ENCODE measurements at regions of chr15 and their contacts with region 1.

Region 1: DNA sequence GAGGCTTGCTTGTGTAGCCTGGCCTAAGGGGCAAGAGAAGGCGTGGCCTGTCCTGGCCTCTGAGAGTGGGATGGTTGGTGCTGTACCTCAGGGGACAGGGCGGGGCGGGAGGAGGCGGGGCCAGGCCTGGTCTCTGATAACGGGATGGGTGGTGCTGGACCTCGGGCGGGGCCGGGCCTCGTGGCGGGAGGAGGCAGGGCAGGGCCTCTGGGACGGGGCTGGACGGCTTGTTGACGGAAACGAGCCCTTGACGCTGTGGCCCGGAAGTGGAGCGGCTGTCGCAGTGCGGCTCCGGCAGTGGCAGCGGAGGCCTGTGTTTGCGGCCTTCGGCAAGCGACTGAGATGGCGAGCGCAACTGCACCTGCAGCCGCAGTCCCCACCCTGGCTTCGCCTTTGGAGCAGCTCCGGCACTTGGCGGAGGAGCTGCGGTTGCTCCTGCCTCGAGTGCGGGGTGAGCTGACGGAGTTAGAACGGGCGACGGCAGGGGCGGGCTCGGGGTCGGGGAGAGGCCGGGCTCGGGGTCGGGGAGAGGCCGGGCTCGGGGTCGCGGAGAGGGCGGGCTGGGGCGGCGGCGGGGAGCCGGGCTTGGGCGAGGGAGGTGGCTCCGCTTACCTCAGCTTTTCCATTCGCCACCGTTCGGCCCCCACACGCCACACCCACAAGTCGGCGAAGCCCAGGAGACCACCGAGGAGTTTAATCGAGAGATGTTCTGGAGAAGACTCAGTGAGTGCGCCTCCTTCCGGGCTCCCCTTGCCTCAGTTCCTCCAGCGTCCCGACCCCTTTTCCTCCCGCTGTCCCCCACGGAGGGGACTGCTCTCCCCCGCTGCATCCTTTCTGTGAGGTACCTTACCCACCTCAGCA is at the start of gene CCNDBP1:
- DNase-seq: peak; percentile 69 to 90 (median 79)
- ATAC-seq: peak; percentile 91
- H3K4me3 ChIP-seq: peak within 1 kb of the TSS; percentile 91
- H3K4me3 Mint-ChIP-seq: peak within 1 kb of the TSS; percentile 90 to 98 (median 96)
- H3K27ac ChIP-seq: peak within 1 kb of the TSS; percentile 95
- H3K27ac Mint-ChIP-seq: peak within 1 kb of the TSS; percentile 95 to 99 (median 98)
- H3K4me1 ChIP-seq: peaks cover 16 to 22% of the 10 kb centered on the region in 2 donors
- H3K4me1 Mint-ChIP-seq: peaks cover 19 to 54% (median 35%) of the 10 kb centered on the region in 7 donors
- H3K27me3 ChIP-seq: no peaks in the 10 kb centered on the region
- H3K27me3 Mint-ChIP-seq: no peaks in the 10 kb centered on the region
- total RNA-seq, gene CCNDBP1: 72.3 to 110 (median 100) TPM

Region 2: DNA sequence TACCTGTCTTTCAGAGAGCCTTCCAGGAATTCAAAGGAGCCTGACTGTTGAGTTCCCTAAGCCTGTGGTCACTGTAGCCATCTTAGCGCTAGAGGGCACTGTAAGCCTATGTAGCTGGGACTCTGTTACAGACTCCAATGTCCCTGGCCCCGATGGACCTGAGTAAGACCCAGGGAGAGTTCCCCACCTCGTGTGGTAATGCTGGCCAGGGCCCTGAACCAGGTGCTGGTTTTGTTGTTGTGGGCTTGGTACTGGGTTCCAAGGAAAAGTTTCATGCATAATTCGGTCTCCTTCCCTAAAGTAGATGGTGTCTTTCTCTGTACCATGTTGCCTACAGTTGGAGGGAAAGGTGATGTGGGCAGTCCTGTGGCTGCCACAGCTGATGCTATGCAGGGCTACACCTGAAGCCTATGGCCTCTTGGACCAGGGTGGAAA is 480.9 kb before region 1 on chr15:
- CTCF ChIA-PET with region 1: no interaction called
- POLR2A ChIA-PET with region 1: no interaction called
- intact Hi-C with region 1: loop called in 1 of 2 experiments (anchors 5 kb)
- DNase-seq: peak in 8 of 9 donors; percentile 23 to 59 (median 53)
- ATAC-seq: peak; percentile 96
- H3K4me3 ChIP-seq: no peak overlapping the region
- H3K4me3 Mint-ChIP-seq: no peak overlapping the region
- H3K27ac ChIP-seq: no peak overlapping the region
- H3K27ac Mint-ChIP-seq: no peak overlapping the region
- H3K4me1 ChIP-seq: no peaks in the 10 kb centered on the region
- H3K4me1 Mint-ChIP-seq: peaks cover 0 to 10% (median 5%) of the 10 kb centered on the region in 7 donors
- H3K27me3 ChIP-seq: no peaks in the 10 kb centered on the region
- H3K27me3 Mint-ChIP-seq: no peaks in the 10 kb centered on the region

Region 3: DNA sequence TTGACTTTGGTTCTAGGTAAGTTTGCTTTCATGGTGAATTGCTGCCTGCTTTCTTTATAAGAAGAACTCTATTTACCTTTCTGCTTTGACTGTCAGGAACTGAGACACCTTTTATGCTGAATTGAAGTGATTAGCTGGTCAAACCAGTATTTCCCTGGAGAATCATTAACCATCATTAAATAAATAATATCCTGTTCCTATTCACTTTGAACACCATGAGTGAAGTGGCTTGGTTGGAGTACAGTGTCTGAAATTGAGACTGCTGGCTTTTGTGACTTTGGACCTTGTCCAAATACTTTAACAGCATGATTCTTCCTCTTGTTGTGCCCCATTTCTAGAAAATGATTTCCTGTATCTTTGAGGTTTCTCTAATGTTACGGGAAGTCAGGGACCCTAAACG is 57.6 kb before region 1 on chr15:
- CTCF ChIA-PET with region 1: no interaction called
- POLR2A ChIA-PET with region 1: interaction called, 4 read pairs
- intact Hi-C with region 1: loop called in 1 of 2 experiments (anchors 1 kb)
- DNase-seq: no peak
- ATAC-seq: no peak
- H3K4me3 ChIP-seq: no peak overlapping the region
- H3K4me3 Mint-ChIP-seq: no peak overlapping the region
- H3K27ac ChIP-seq: no peak overlapping the region
- H3K27ac Mint-ChIP-seq: no peak overlapping the region
- H3K4me1 ChIP-seq: peaks cover 0 to 4% of the 10 kb centered on the region in 2 donors
- H3K4me1 Mint-ChIP-seq: peaks cover 8 to 19% (median 13%) of the 10 kb centered on the region in 7 donors
- H3K27me3 ChIP-seq: no peaks in the 10 kb centered on the region
- H3K27me3 Mint-ChIP-seq: peaks cover 5 to 28% (median 7%) of the 10 kb centered on the region in 5 donors

Region 4: GRCh38 chr15:43204016-43204901 is 18.9 kb after region 1 on chr15:
- CTCF ChIA-PET with region 1: interaction called, 8 read pairs
- POLR2A ChIA-PET with region 1: interaction called, 6 read pairs
- intact Hi-C with region 1: loop called (anchors 1 kb)
- DNase-seq: peak in 7 of 9 donors; percentile 21 to 37 (median 29)
- ATAC-seq: peak; percentile 66
- H3K4me3 ChIP-seq: no peak overlapping the region
- H3K4me3 Mint-ChIP-seq: no peak overlapping the region
- H3K27ac ChIP-seq: no peak overlapping the region
- H3K27ac Mint-ChIP-seq: peak overlapping the region in 1 of 9 donors; percentile 66
- H3K4me1 ChIP-seq: no peaks in the 10 kb centered on the region
- H3K4me1 Mint-ChIP-seq: peaks cover 0 to 10% (median 5%) of the 10 kb centered on the region in 7 donors
- H3K27me3 ChIP-seq: no peaks in the 10 kb centered on the region
- H3K27me3 Mint-ChIP-seq: peaks cover 8 to 16% (median 13%) of the 10 kb centered on the region in 5 donors

Region 5: GRCh38 chr15:43329960-43330779 is 144.8 kb after region 1 on chr15 and contains the start of gene LCMT2:
- CTCF ChIA-PET with region 1: no interaction called
- POLR2A ChIA-PET with region 1: interaction called, 4 read pairs
- intact Hi-C with region 1: loop called in 1 of 2 experiments (anchors 1 kb)
- DNase-seq: peak; percentile 80 to 95 (median 92)
- ATAC-seq: peak; percentile 92
- H3K4me3 ChIP-seq: peak within 1 kb of the TSS; percentile 84
- H3K4me3 Mint-ChIP-seq: peak within 1 kb of the TSS; percentile 89 to 98 (median 96)
- H3K27ac ChIP-seq: peak within 1 kb of the TSS; percentile 88
- H3K27ac Mint-ChIP-seq: peak within 1 kb of the TSS; percentile 93 to 99 (median 99)
- H3K4me1 ChIP-seq: peaks cover 19 to 22% of the 10 kb centered on the region in 2 donors
- H3K4me1 Mint-ChIP-seq: peaks cover 19 to 54% (median 46%) of the 10 kb centered on the region in 7 donors
- H3K27me3 ChIP-seq: no peaks in the 10 kb centered on the region
- H3K27me3 Mint-ChIP-seq: peaks cover 0 to 4% (median 0%) of the 10 kb centered on the region in 5 donors
- total RNA-seq, gene LCMT2: 10.1 to 19.1 (median 15.0) TPM

Region 6: DNA sequence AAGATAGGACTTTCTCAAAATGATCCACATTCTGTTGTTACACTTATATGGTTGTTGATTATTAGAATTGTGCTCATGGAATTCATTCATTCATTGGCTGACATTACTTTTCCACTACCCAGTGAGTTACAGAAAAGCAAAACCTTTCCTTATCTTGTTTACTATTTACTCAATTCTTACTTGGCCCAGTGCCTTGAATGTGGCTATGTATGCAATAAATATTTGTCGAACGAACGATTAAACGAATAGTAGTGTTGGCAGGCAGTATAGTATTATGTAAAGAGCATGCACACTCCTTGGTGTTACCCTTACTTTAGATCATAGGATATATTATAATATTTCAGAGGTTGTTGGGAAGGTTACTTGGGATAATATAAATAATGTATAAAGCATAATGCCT is 1273.0 kb after region 1 on chr15:
- CTCF ChIA-PET with region 1: no interaction called
- POLR2A ChIA-PET with region 1: no interaction called
- intact Hi-C with region 1: no loop called
- DNase-seq: no peak
- ATAC-seq: no peak
- H3K4me3 ChIP-seq: no peak overlapping the region
- H3K4me3 Mint-ChIP-seq: no peak overlapping the region
- H3K27ac ChIP-seq: no peak overlapping the region
- H3K27ac Mint-ChIP-seq: peak overlapping the region in 1 of 9 donors; percentile 2
- H3K4me1 ChIP-seq: no peaks in the 10 kb centered on the region
- H3K4me1 Mint-ChIP-seq: peaks cover 21 to 53% (median 31%) of the 10 kb centered on the region in 7 donors
- H3K27me3 ChIP-seq: no peaks in the 10 kb centered on the region
- H3K27me3 Mint-ChIP-seq: no peaks in the 10 kb centered on the region

Measured in naive thymus-derived CD4-positive, alpha-beta T cell (primary cell).